Activated T-helper 2 cell treated with anti-CD3 and anti-CD28 coated beads, Interferon-gamma antibody, Interleukin-2, Interleukin-4, amounts not matched to agents 10 μg/mL and 5 μg/mL and 100 μg/mL, durations not matched to agents 14 hours and 24 hours and 36 hours (primary cell): ENCODE measurements at regions of chr18 and their contacts with region 1.

Region 1: GRCh38 chr18:5879479-5879882 is 15.8 kb downstream of the TMEM200C start:
- DNase-seq: no peak
- H3K4me3 Mint-ChIP-seq: no peak overlapping the region
- H3K27ac Mint-ChIP-seq: no peak overlapping the region
- H3K4me1 Mint-ChIP-seq: no peaks in the 10 kb centered on the region
- H3K27me3 Mint-ChIP-seq: peaks cover 5% of the 10 kb centered on the region

Region 2: GRCh38 chr18:6219116-6219717 is 339.7 kb after region 1 on chr18:
- intact Hi-C with region 1: loop called (anchors 1 kb)
- DNase-seq: peak; percentile 9
- H3K4me3 Mint-ChIP-seq: no peak overlapping the region
- H3K27ac Mint-ChIP-seq: no peak overlapping the region
- H3K4me1 Mint-ChIP-seq: no peaks in the 10 kb centered on the region
- H3K27me3 Mint-ChIP-seq: no peaks in the 10 kb centered on the region